ENCODE measurements at regions of chr16 and their contacts with region 1.

Region 1: DNA sequence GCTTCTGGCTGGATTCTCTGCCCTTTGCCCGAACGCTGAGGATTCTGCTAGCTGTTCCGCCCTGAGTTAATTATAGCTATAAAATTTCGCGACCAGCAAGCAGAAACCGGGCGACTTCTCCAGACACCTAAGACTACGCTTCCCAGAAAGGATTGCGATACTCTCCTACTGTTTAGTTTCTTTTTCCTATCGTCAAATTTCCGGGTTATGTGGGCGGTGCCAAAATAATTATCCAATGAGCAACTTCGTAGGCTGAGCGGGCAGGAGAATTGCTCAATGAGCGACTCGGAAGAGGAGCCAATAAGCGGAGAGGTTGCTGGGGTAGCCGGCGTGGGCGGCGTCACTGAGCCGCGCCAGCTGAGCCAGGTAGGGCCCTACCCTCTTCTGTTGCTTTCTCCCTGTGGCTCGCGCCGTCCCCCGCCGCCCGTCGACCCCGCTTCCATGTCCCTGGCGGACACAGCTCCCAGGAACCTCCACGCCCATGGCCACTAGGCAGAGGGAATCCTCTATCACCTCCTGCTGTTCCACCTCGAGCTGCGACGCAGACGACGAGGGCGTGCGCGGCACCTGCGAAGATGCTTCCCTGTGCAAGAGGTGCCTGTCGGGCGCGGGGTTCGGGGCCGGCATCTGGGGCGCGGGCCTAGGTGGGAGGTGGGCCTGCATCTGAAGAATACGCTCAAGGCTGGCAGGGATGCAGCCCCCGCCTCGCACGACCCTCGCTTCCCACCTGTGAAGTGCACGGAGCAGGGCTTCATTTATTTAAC is at the start of gene LCMT1:
- DNase-seq: peak; percentile 94
- H3K4me3 ChIP-seq: peak within 1 kb of the TSS; percentile 54 to 98 (median 74)
- H3K27ac ChIP-seq: peak within 1 kb of the TSS; percentile 84 to 91 (median 91)
- H3K4me1 ChIP-seq: peaks cover 17 to 53% (median 35%) of the 10 kb centered on the region in 4 donors
- H3K27me3 ChIP-seq: no peaks in the 10 kb centered on the region
- CTCF ChIP-seq: peak in 1 of 5 experiments; percentile 23
- EP300 ChIP-seq: no peak
- POLR2A ChIP-seq: peak; percentile 78
- total RNA-seq, gene LCMT1: 23.5 to 53.7 (median 43.6) TPM

Region 2: DNA sequence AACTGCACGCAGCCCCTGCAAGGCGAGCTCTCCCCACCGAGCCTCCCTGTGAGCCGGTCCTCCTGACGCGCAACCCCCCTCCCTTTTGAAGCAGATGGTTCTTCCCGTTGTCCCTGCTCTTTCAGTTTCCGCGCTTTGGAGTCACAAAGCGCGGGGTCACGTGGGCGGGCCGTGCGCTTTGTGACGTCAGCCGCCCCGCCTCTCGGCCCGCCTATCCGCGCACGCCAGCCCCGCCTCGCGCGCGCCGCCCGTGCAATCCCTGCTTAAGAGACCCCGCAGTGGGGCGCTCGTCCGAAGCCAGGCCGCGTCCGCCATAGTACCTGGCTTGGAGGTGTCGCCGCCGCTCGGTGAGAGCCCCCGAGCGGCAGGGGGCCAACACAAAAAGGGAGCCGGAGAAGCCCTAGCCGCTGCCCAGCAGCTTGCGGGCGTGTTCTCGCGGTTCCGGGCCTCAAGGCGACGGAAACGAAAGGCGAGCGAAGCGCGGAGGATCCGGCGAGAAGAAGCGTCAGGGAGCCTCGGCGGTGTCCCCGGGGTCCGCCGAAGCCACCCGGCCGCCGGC is 572.2 kb before region 1 on chr16 and contains the start of gene RBBP6:
- in situ Hi-C with region 1: loop called in 1 of 4 experiments (anchors 25 kb)
- intact Hi-C with region 1: no loop called
- DNase-seq: peak; percentile 95
- H3K4me3 ChIP-seq: peak within 1 kb of the TSS; percentile 92 to 100 (median 96)
- H3K27ac ChIP-seq: peak within 1 kb of the TSS; percentile 100
- H3K4me1 ChIP-seq: peaks cover 19 to 34% (median 27%) of the 10 kb centered on the region in 4 donors
- H3K27me3 ChIP-seq: no peaks in the 10 kb centered on the region
- CTCF ChIP-seq: peak in 4 of 5 experiments; percentile 1 to 60 (median 25)
- EP300 ChIP-seq: peak; percentile 37
- POLR2A ChIP-seq: peak; percentile 99
- total RNA-seq, gene RBBP6: 38.5 to 67.5 (median 58.5) TPM

Measured in transverse colon (tissue), 4 donors.